A673 (cell line): ENCODE measurements at regions of chr14 and their contacts with region 1.

Region 1: DNA sequence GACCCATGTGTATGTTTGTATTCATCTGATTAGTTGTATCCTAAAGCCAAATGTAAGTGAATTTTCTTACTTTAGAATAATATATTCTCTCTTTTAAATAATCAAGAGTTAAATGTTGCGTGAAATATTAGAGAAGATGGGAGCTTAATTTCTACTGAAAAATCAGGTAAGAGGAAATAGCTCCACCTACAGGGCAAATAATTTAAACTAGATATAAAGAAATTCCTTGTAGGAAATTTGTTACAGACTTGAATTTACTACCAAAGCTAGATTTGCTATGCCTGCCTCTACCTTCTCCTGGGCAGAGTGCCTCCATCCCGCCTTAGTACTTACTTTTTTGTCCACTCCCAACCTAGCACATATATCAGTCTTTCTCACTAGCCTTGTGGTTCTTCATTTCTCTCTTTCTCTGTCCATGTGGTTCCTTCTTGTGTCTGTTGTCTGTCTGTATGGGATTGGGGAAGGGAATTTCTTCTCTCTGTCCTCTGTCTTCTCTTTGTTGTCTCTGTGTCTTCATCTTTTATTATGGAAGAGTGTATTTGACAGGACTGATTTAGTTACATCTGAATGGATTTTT is 44.7 kb downstream of the PALS1 start:
- DNase-seq: peak; percentile 74
- H3K4me3 ChIP-seq: no peak overlapping the region
- H3K27ac ChIP-seq: peak overlapping the region; percentile 56
- H3K4me1 ChIP-seq: peaks cover 49% of the 10 kb centered on the region
- H3K27me3 ChIP-seq: no peaks in the 10 kb centered on the region
- CTCF ChIP-seq: peak; percentile 67

Region 2: DNA sequence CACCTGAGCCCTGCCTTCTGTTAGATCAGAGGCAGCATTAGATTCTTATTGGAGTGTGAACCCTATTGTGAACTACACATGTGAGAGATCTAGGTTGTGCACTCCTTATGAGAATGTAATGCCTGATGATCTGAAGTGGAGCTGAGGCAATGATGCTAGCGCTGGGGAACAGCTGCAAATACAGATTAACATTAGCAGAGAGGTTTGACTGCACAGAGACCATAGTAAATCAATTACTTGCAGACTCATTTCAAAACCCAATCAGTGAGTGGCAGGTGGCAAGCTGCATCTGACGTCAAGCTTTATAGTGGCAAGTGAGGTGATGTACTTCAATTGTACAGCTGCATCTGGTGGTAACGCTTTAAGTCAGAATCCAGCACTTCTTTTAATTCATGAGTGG is 636.5 kb before region 1 on chr14:
- CTCF ChIA-PET with region 1: no interaction called
- POLR2A ChIA-PET with region 1: no interaction called
- intact Hi-C with region 1: no loop called
- DNase-seq: no peak
- H3K4me3 ChIP-seq: no peak overlapping the region
- H3K27ac ChIP-seq: no peak overlapping the region
- H3K4me1 ChIP-seq: no peaks in the 10 kb centered on the region
- H3K27me3 ChIP-seq: no peaks in the 10 kb centered on the region
- CTCF ChIP-seq: no peak

Region 3: GRCh38 chr14:67359775-67360648 is 74.0 kb after region 1 on chr14 and contains the starts of genes ATP6V1D and EIF2S1:
- CTCF ChIA-PET with region 1: interaction called, 10 read pairs
- POLR2A ChIA-PET with region 1: no interaction called
- intact Hi-C with region 1: no loop called
- DNase-seq: peak; percentile 99
- H3K4me3 ChIP-seq: peak within 1 kb of the TSS; percentile 86
- H3K27ac ChIP-seq: peak within 1 kb of the TSS; percentile 99
- H3K4me1 ChIP-seq: peaks cover 31% of the 10 kb centered on the region
- H3K27me3 ChIP-seq: no peaks in the 10 kb centered on the region
- CTCF ChIP-seq: peak; percentile 100
- total RNA-seq, gene ATP6V1D: 111 and 122 TPM in 2 replicates
- total RNA-seq, gene EIF2S1: 236 and 302 TPM in 2 replicates